Panc1 (cell line): ENCODE measurements at regions of chr3 and their contacts with region 1.

Region 1: GRCh38 chr3:158434412-158435038 is 136.5 kb upstream of the MLF1 start:
- DNase-seq: peak; percentile 63
- ATAC-seq: peak; percentile 98
- H3K4me3 ChIP-seq: no peak overlapping the region
- H3K27ac ChIP-seq: no peak overlapping the region
- H3K4me1 ChIP-seq: no peaks in the 10 kb centered on the region
- H3K27me3 ChIP-seq: no peaks in the 10 kb centered on the region
- CTCF ChIP-seq: peak; percentile 82; the same call in 1 of the 2 replicates

Region 2: GRCh38 chr3:158097593-158098308 is 336.8 kb before region 1 on chr3:
- CTCF ChIA-PET with region 1: no interaction called
- POLR2A ChIA-PET with region 1: no interaction called
- in situ Hi-C with region 1: no loop called
- intact Hi-C with region 1: loop called (anchors 5 kb)
- DNase-seq: no peak
- ATAC-seq: peak; percentile 99
- H3K4me3 ChIP-seq: peak overlapping the region; percentile 74 to 77
- H3K27ac ChIP-seq: peak overlapping the region; percentile 92
- H3K4me1 ChIP-seq: peaks cover 7% of the 10 kb centered on the region; the same call in 1 of the 2 replicates
- H3K27me3 ChIP-seq: no peaks in the 10 kb centered on the region; the same call in 1 of the 2 replicates
- CTCF ChIP-seq: no peak

Region 3: GRCh38 chr3:158407844-158408517 is 26.5 kb before region 1 on chr3:
- CTCF ChIA-PET with region 1: no interaction called
- POLR2A ChIA-PET with region 1: no interaction called
- in situ Hi-C with region 1: no loop called
- intact Hi-C with region 1: no loop called
- DNase-seq: no peak
- ATAC-seq: no peak
- H3K4me3 ChIP-seq: no peak overlapping the region
- H3K27ac ChIP-seq: no peak overlapping the region
- H3K4me1 ChIP-seq: no peaks in the 10 kb centered on the region
- H3K27me3 ChIP-seq: no peaks in the 10 kb centered on the region
- CTCF ChIP-seq: no peak